ENCODE measurements at regions of chr1 and their contacts with region 1.

Region 1: GRCh38 chr1:36149237-36149972 is at the start of gene TRAPPC3:
- H3K4me3 ChIP-seq: peak within 1 kb of the TSS; percentile 90
- H3K27ac ChIP-seq: peak within 1 kb of the TSS; percentile 61; the same call in 1 of the 2 replicates
- H3K4me1 ChIP-seq: no peaks in the 10 kb centered on the region
- CTCF ChIP-seq: peak; percentile 99

Region 2: GRCh38 chr1:36170643-36171412 is 21.4 kb after region 1 on chr1:
- CTCF ChIA-PET with region 1: interaction called, 10 read pairs
- POLR2A ChIA-PET with region 1: no interaction called
- H3K4me3 ChIP-seq: no peak overlapping the region
- H3K27ac ChIP-seq: no peak overlapping the region
- H3K4me1 ChIP-seq: no peaks in the 10 kb centered on the region
- CTCF ChIP-seq: no peak

Region 3: DNA sequence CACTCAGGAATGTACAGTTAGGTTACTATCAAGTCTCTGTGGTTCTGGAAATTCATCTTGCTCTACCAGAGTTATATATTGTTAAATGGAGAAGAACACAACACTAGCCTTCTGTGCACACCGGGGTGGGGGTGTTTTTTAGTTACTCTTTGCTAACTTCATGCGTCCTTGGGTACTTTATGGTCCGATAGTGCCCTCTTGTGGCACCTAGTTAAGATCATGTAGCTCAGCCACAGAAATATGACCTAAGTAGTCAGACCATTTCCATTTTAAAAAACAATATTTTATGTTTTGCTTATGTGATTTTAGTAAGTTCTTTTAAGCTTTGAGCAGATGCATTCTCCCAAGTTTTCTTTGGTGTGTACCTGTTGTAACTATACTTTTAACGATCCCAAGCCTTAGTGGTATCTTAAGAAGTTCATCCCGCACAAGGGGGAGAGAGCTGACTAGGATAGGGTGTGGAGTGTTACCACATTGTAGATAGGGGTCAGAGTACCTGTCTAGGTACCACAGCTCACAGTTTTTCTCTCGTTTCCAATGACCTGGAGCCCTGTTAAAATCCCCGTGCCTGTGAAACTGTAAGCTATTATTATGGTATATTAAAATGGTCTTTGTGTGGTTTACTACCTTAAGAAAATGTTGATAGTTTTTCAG is 136.2 kb after region 1 on chr1:
- CTCF ChIA-PET with region 1: interaction called, 74 read pairs
- POLR2A ChIA-PET with region 1: interaction called, 4 read pairs
- H3K4me3 ChIP-seq: no peak overlapping the region
- H3K27ac ChIP-seq: no peak overlapping the region
- H3K4me1 ChIP-seq: no peaks in the 10 kb centered on the region
- CTCF ChIP-seq: peak; percentile 58; the same call in 1 of the 2 replicates

Region 4: DNA sequence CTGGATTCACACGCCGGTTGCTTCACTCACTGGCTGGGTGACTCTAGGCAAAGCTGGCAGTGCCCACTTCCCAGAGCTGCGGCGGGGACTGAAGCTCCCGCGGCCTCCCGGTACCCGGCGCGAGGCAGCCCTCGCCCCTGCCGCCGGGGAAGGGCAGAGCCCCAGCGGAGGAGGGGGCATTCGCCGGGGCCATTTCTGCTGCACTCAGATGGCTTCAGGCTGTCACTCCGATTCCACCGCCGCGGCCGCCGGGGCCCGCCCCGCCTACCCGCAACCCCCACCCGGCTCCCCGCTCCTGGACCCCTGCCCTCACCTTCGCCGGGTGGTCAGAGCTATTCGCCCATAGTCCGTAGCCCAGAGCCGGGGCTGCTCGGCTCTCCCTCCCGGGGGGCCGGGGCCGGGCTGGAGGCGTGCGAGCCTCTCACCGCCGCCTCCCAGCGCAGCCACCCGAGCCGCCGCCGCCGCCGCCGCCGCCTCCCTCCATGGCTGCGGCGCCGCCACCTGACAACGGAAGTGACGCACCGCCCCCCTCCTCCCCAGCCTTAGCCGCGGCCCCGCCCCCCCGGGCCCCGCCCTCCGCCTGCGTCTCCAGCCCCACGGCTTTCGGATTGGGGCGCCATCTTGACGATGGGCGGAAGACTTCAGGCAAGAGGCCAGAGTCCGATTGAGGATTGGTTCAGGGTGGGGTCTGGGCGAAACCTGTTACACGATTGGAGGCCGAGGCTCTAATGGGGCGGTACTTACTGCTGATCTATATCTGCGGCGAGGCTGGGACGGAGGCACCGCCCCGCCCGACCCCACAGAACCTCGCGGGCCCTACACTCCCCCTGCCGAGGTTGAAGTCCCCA is 236.2 kb after region 1 on chr1 and contains the start of gene STK40:
- CTCF ChIA-PET with region 1: interaction called, 6 read pairs
- POLR2A ChIA-PET with region 1: interaction called, 10 read pairs
- H3K4me3 ChIP-seq: peak within 1 kb of the TSS; percentile 81
- H3K27ac ChIP-seq: peak within 1 kb of the TSS; percentile 78
- H3K4me1 ChIP-seq: peaks cover 3% of the 10 kb centered on the region
- CTCF ChIP-seq: no peak

Measured in HEK293 (cell line).